ENCODE measurements at regions of chrX and their contacts with region 1.

Region 1: DNA sequence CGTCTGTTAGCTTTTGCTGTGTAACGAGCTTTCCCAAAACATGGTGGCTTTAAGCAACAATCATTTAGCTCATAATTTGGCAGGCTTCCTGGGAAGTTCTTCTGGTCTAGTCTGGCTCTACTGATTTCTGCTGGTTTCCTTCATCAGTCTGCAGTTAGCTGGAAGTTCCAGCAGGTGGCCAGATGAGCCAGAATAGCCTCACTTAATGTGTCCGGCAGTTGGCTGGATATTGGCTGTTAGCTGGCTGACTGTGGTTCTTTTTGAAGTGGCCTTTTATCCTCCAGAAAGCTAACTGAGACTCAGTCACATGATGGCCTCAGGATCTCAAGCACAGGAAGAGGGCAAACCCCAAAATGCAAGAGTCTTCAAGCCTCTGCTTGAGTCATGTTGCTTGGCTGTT is 34.9 kb downstream of the FTHL17 start:
- DNase-seq: no peak
- H3K4me3 ChIP-seq: no peak overlapping the region
- H3K27me3 ChIP-seq: no peaks in the 10 kb centered on the region
- CTCF ChIP-seq: peak; percentile 69

Region 2: DNA sequence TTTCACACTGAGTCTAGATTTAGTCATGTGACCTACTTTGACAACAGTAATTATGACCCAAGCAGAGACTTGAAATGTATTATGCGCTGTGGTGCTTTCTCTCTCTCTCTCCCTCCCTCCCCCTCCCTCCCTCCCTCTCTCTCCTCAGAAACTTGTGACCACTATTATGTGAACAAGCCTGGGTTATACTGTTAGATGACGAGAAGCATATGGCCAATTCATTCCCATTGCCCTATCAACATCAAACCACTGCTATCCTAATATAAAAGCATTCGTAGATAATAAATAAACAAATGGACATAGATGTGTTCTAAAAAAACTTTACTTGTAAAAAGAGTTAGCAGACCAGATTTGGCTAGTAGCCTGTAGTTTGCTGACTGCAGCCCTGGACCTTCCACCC is 16.7 kb after region 1 on chrX:
- CTCF ChIA-PET with region 1: interaction called, 12 read pairs
- POLR2A ChIA-PET with region 1: no interaction called
- DNase-seq: no peak
- H3K4me3 ChIP-seq: no peak overlapping the region
- H3K27me3 ChIP-seq: no peaks in the 10 kb centered on the region
- CTCF ChIP-seq: no peak

Region 3: GRCh38 chrX:31196873-31197272 is 160.0 kb after region 1 on chrX:
- CTCF ChIA-PET with region 1: no interaction called
- POLR2A ChIA-PET with region 1: no interaction called
- DNase-seq: no peak
- H3K4me3 ChIP-seq: no peak overlapping the region
- H3K27me3 ChIP-seq: no peaks in the 10 kb centered on the region
- CTCF ChIP-seq: no peak

Region 4: DNA sequence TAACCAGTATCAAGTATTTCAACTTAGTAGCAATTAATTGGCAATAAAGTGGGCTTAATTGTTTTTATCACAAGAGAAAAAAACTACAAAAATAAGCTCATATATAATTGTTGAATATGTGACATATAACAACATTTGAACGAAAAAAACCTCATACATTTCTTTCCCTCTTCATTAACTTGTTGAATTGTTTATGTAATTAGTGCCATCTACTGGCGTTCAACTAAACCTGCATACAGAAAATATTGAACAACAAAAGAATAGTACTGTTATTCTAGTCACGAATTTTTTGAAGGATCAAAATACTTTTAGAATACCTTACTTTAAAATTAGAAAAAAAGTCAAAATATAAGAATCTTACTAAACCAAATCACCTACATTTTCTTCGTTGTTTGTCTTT is 621.5 kb after region 1 on chrX:
- CTCF ChIA-PET with region 1: interaction called, 87 read pairs
- POLR2A ChIA-PET with region 1: no interaction called
- DNase-seq: no peak
- H3K4me3 ChIP-seq: no peak overlapping the region
- H3K27me3 ChIP-seq: no peaks in the 10 kb centered on the region
- CTCF ChIP-seq: peak; percentile 31; the same call in 1 of the 2 replicates

Region 5: DNA sequence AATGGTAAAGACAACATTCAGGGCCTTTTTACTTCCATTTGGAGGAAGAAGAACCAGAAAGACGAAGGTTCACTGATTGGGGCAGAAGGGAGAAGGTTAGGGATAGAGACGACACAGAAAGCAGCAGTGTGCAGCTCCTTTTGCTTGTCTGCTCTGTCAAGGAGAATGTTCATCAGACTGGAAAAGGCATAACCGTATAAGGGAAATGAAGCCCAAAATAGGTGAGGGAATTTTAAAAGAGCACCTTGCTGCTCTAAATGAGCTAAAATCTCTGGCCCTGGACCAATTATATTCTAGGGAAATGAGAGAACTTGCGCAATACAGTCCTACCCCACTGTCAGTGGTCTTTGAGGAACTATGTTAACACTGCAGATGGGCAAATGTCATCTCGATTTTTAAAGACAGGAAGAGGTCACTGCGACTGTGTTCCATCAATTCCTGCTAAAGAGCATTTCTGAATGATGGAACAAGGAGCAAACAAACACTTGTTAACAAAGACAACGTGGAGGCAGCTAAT is 944.7 kb after region 1 on chrX:
- CTCF ChIA-PET with region 1: no interaction called
- POLR2A ChIA-PET with region 1: no interaction called
- DNase-seq: no peak
- H3K4me3 ChIP-seq: no peak overlapping the region
- H3K27me3 ChIP-seq: no peaks in the 10 kb centered on the region
- CTCF ChIP-seq: no peak